ENCODE measurements at regions of chr3 and their contacts with region 1.

Region 1: GRCh38 chr3:71130471-71131374 is 452.8 kb downstream of the FOXP1 start:
- DNase-seq: peak; percentile 45
- H3K4me3 Mint-ChIP-seq: peak overlapping the region; percentile 88
- H3K27ac Mint-ChIP-seq: peak overlapping the region; percentile 89
- H3K4me1 Mint-ChIP-seq: peaks cover 59% of the 10 kb centered on the region
- H3K27me3 Mint-ChIP-seq: no peaks in the 10 kb centered on the region
- CTCF ChIP-seq: no peak

Region 2: GRCh38 chr3:71006810-71007785 is 123.6 kb before region 1 on chr3:
- CTCF ChIA-PET with region 1: no interaction called
- intact Hi-C with region 1: loop called (anchors 5 kb)
- DNase-seq: peak; percentile 29
- H3K4me3 Mint-ChIP-seq: no peak overlapping the region
- H3K27ac Mint-ChIP-seq: peak overlapping the region; percentile 87
- H3K4me1 Mint-ChIP-seq: peaks cover 23% of the 10 kb centered on the region
- H3K27me3 Mint-ChIP-seq: no peaks in the 10 kb centered on the region
- CTCF ChIP-seq: no peak

Region 3: GRCh38 chr3:71258116-71258515 is 127.4 kb after region 1 on chr3:
- CTCF ChIA-PET with region 1: no interaction called
- intact Hi-C with region 1: loop called (anchors 5 kb)
- DNase-seq: peak; percentile 27
- H3K4me3 Mint-ChIP-seq: peak overlapping the region; percentile 24
- H3K27ac Mint-ChIP-seq: peak overlapping the region; percentile 82
- H3K4me1 Mint-ChIP-seq: peaks cover 36% of the 10 kb centered on the region
- H3K27me3 Mint-ChIP-seq: no peaks in the 10 kb centered on the region
- CTCF ChIP-seq: no peak

Region 4: GRCh38 chr3:71389911-71390573 is 259.3 kb after region 1 on chr3:
- CTCF ChIA-PET with region 1: interaction called, 3 read pairs
- intact Hi-C with region 1: loop called (anchors 5 kb)
- DNase-seq: peak; percentile 28
- H3K4me3 Mint-ChIP-seq: peak overlapping the region; percentile 43
- H3K27ac Mint-ChIP-seq: no peak overlapping the region
- H3K4me1 Mint-ChIP-seq: peaks cover 15% of the 10 kb centered on the region
- H3K27me3 Mint-ChIP-seq: no peaks in the 10 kb centered on the region
- CTCF ChIP-seq: no peak